Panc1 (cell line): ENCODE measurements at regions of chr15 and their contacts with region 1.

Region 1: DNA sequence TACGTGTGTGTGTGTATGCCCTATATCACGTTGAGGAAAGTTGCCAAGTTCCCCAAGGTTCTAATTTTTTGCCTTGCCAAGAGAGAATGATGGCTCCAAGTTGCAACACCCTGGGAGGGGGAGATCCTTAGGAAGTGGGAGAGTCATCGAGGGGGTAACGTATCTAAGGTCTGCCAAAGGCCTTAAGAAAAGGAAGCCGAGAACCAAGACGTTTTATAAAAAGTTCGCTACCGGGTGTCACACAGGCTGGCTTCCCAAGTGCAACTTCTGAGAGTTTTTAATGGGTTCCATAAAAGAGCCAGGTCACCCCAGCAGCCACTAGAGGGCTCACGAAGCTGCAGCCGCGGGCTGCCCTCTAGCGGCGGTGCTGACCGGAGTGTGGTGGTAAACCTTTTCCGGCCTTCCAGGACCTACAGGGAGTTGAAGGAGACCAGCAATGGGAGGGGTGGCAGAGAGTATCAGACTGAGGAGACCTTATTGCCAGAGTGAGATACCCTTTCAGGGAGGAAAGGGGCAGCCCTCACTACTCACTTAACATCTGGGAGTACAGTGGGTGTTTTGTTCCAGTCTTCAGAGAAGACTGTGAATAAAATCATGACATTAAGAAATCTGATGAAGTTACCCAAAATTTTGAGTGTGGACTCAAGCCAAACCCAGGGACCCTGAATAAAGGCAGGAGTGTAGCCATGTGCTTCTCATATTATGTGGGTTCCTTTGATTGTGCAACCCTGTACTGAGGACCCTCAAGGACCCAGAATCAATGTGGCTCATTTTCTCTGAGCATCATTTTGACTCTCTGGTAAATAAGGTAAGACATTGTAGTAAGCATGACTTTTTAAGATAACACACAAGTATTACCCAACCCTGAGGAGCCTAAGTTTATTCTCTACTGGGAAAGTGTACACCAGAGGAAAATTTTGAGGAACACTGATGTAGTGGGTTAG is 2.5 kb upstream of the RFX7 start:
- DNase-seq: peak; percentile 81
- ATAC-seq: peak; percentile 79
- H3K4me3 ChIP-seq: peak overlapping the region; percentile 34 to 87
- H3K27ac ChIP-seq: peak overlapping the region; percentile 95
- H3K4me1 ChIP-seq: peaks cover 9% of the 10 kb centered on the region
- H3K27me3 ChIP-seq: no peaks in the 10 kb centered on the region
- CTCF ChIP-seq: peak; percentile 100

Region 2: DNA sequence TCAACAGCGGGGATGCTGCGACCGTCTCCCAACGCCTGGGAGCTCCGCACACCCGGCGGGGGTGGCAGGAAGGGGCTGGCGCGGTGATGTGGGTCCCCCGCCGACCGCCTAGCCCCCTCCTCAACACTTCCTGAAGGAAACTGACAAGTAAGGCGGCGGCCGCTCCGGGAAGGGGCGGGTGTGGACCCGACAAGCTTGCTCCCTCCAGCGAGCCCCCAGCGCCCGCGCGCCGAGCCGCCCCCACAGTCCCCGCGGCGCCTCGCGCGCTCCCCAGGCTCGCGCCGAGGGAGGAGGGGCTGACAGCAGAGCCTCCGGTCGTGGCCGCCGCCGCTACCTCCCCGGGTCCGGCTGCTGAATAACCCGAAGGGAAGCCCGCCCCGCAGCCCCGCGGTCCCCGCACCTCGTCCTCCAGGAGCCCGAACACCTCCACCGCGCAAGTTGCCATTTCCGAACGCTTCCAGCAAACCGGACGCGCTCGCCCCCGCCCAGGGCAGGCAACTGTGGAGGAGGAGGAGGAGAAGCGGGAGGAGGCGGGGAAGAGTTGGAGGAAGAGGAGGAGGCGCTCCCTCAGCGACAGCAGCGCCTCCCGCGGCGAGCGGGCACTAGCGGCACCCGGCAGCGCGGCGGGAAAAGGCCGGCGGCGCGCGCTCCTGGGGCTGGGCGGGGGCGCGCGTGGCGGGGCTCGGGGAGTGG is 252.9 kb before region 1 on chr15 and contains the start of gene NEDD4:
- CTCF ChIA-PET with region 1: no interaction called
- POLR2A ChIA-PET with region 1: no interaction called
- in situ Hi-C with region 1: no loop called
- intact Hi-C with region 1: loop called (anchors 10 kb)
- DNase-seq: no peak
- ATAC-seq: peak; percentile 98
- H3K4me3 ChIP-seq: peak within 1 kb of the TSS; percentile 65 to 90
- H3K27ac ChIP-seq: peak within 1 kb of the TSS; percentile 89
- H3K4me1 ChIP-seq: peaks cover 19% of the 10 kb centered on the region
- H3K27me3 ChIP-seq: no peaks in the 10 kb centered on the region
- CTCF ChIP-seq: peak; percentile 86
- total RNA-seq, gene NEDD4: 18.8 TPM

Region 3: GRCh38 chr15:56102441-56102840 is 143.7 kb before region 1 on chr15:
- CTCF ChIA-PET with region 1: no interaction called
- POLR2A ChIA-PET with region 1: no interaction called
- in situ Hi-C with region 1: no loop called
- intact Hi-C with region 1: loop called (anchors 10 kb)
- DNase-seq: no peak
- ATAC-seq: no peak
- H3K4me3 ChIP-seq: no peak overlapping the region
- H3K27ac ChIP-seq: no peak overlapping the region
- H3K4me1 ChIP-seq: no peaks in the 10 kb centered on the region
- H3K27me3 ChIP-seq: no peaks in the 10 kb centered on the region
- CTCF ChIP-seq: no peak

Region 4: GRCh38 chr15:56281145-56281544 is 35.0 kb after region 1 on chr15:
- CTCF ChIA-PET with region 1: no interaction called
- POLR2A ChIA-PET with region 1: no interaction called
- in situ Hi-C with region 1: no loop called
- intact Hi-C with region 1: no loop called
- DNase-seq: no peak
- ATAC-seq: no peak
- H3K4me3 ChIP-seq: no peak overlapping the region
- H3K27ac ChIP-seq: no peak overlapping the region
- H3K4me1 ChIP-seq: no peaks in the 10 kb centered on the region
- H3K27me3 ChIP-seq: peaks cover 3% of the 10 kb centered on the region; the same call in 1 of the 2 replicates
- CTCF ChIP-seq: no peak

Region 5: GRCh38 chr15:56365075-56365711 is 119.0 kb after region 1 on chr15 and contains the start of gene TEX9:
- CTCF ChIA-PET with region 1: interaction called, 3 read pairs
- POLR2A ChIA-PET with region 1: interaction called, 3 read pairs
- in situ Hi-C with region 1: no loop called
- intact Hi-C with region 1: loop called (anchors 5 kb)
- DNase-seq: peak; percentile 48
- ATAC-seq: peak; percentile 100
- H3K4me3 ChIP-seq: peak within 1 kb of the TSS; percentile 51 to 77
- H3K27ac ChIP-seq: peak within 1 kb of the TSS; percentile 70
- H3K4me1 ChIP-seq: peaks cover 6% of the 10 kb centered on the region; the same call in 1 of the 2 replicates
- H3K27me3 ChIP-seq: peaks cover 4% of the 10 kb centered on the region; the same call in 1 of the 2 replicates
- CTCF ChIP-seq: no peak
- total RNA-seq, gene TEX9: 4.1 TPM

Region 6: GRCh38 chr15:56428821-56429458 is 182.8 kb after region 1 on chr15:
- CTCF ChIA-PET with region 1: no interaction called
- POLR2A ChIA-PET with region 1: no interaction called
- in situ Hi-C with region 1: no loop called
- intact Hi-C with region 1: loop called (anchors 1 kb)
- DNase-seq: peak; percentile 20
- ATAC-seq: peak; percentile 70; the same call in 1 of the 2 replicates
- H3K4me3 ChIP-seq: no peak overlapping the region
- H3K27ac ChIP-seq: no peak overlapping the region
- H3K4me1 ChIP-seq: no peaks in the 10 kb centered on the region
- H3K27me3 ChIP-seq: no peaks in the 10 kb centered on the region
- CTCF ChIP-seq: peak; percentile 59; the same call in 1 of the 2 replicates